Calu3 (cell line): ENCODE measurements at regions of chrX and their contacts with region 1.

Region 1: DNA sequence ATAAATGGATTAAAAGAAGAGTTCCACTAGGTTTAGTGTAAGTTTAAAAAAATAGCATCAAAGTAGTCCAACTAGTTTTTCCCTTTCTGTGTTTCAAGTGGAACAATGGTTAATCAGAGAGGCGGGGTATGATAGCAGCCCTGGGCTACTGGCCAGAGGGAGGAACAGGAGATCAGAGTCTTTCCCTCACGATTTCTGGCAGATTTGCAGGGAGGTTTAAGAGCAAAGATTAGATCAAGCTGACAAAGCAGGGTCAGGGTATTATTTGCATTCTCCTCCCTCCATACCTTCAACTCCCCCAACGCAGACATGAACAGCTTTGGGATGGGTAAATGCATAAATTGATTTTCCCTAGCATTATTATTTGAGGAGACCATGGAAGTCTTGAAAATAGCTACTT is 277.6 kb upstream of the DIAPH2 start:
- DNase-seq: peak; percentile 30
- H3K4me3 Mint-ChIP-seq: no peak overlapping the region
- H3K27ac Mint-ChIP-seq: peak overlapping the region; percentile 22
- H3K4me1 Mint-ChIP-seq: peaks cover 43% of the 10 kb centered on the region
- H3K27me3 Mint-ChIP-seq: no peaks in the 10 kb centered on the region
- CTCF ChIP-seq: no peak

Region 2: DNA sequence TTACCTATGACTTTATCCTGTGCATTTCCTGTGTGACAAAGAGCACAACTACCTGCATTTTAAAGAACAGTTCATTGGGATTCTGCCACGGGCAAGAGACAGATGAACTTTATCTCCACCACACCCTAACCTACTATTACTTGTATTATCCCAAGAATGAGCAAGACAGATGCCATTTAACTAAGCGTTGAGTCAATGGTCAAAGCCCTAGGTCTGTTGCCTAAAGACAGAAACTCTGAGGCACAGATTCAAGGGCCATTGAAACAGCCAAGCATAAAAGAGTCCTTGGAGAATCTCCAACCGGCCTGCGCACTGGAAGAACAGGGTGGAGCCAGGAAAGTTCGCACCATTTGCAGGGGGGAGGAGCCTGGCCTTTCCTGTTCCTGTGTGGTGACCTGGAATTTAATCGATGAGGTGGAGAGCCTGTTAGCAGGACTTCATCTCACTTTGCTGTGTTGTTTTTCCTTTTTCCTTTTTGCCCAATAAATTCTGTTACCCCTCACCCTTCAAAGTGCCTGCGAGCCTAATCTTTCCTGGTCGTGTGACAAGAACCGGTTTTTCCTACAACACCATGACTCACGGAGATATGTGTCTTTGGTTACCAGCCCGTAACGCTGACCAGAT is 131.2 kb after region 1 on chrX:
- CTCF ChIA-PET with region 1: no interaction called
- intact Hi-C with region 1: loop called (anchors 10 kb)
- DNase-seq: peak; percentile 59
- H3K4me3 Mint-ChIP-seq: peak overlapping the region; percentile 69
- H3K27ac Mint-ChIP-seq: peak overlapping the region; percentile 96
- H3K4me1 Mint-ChIP-seq: peaks cover 13% of the 10 kb centered on the region
- H3K27me3 Mint-ChIP-seq: no peaks in the 10 kb centered on the region
- CTCF ChIP-seq: no peak